Activated naive CD4-positive, alpha-beta T cell treated with anti-CD3 and anti-CD28 coated beads for 36 hours (primary cell): ENCODE measurements at regions of chr7 and their contacts with region 1.

Region 1: DNA sequence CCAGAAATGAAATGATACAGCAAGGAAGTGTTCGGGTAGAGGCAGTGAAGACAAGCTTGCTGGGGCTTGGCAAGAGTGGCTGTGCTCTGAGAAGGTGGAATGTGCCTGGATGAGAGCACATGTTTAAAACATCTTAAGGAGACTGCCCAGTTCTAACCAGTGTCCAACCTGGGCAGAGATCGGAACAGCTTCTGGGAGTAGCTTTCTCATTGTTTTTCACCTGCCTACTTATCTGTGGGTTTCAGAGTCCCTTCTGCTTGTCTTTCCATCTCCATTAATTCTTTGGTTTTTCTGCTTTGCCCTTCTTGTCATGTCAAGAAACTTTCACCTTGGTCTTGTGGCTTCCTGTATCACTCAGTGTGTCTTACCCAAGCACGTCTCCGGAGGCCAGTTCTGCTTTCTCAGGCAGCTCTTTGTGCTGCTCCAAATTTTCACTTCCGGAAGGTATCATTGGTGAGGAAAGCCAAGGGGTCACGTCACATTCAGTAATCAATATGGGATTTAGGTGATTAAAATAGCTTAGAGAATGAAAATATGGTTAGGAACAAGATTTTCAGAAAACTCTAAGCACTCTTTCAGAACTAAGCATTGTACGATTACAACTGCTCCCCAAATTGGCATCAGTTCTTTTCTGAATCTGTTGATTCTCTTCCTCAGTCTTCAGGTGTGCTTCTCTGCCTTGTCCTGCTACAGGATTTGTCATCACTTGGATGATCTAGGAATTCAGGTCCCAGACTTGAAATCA is 5.5 kb upstream of the LAMB4 start:
- DNase-seq: peak; percentile 61
- H3K4me3 Mint-ChIP-seq: no peak overlapping the region
- H3K27ac Mint-ChIP-seq: peak overlapping the region; percentile 64
- H3K4me1 Mint-ChIP-seq: peaks cover 17% of the 10 kb centered on the region
- H3K27me3 Mint-ChIP-seq: no peaks in the 10 kb centered on the region

Region 2: GRCh38 chr7:107890962-107891635 is 244.5 kb before region 1 on chr7 and contains the start of gene DLD:
- CTCF ChIA-PET with region 1: no interaction called
- intact Hi-C with region 1: loop called (anchors 1 kb)
- DNase-seq: peak; percentile 96
- H3K4me3 Mint-ChIP-seq: peak within 1 kb of the TSS; percentile 100
- H3K27ac Mint-ChIP-seq: peak within 1 kb of the TSS; percentile 98
- H3K4me1 Mint-ChIP-seq: peaks cover 37% of the 10 kb centered on the region
- H3K27me3 Mint-ChIP-seq: no peaks in the 10 kb centered on the region
- total RNA-seq, gene DLD: 92.6 to 96.8 TPM

Region 3: DNA sequence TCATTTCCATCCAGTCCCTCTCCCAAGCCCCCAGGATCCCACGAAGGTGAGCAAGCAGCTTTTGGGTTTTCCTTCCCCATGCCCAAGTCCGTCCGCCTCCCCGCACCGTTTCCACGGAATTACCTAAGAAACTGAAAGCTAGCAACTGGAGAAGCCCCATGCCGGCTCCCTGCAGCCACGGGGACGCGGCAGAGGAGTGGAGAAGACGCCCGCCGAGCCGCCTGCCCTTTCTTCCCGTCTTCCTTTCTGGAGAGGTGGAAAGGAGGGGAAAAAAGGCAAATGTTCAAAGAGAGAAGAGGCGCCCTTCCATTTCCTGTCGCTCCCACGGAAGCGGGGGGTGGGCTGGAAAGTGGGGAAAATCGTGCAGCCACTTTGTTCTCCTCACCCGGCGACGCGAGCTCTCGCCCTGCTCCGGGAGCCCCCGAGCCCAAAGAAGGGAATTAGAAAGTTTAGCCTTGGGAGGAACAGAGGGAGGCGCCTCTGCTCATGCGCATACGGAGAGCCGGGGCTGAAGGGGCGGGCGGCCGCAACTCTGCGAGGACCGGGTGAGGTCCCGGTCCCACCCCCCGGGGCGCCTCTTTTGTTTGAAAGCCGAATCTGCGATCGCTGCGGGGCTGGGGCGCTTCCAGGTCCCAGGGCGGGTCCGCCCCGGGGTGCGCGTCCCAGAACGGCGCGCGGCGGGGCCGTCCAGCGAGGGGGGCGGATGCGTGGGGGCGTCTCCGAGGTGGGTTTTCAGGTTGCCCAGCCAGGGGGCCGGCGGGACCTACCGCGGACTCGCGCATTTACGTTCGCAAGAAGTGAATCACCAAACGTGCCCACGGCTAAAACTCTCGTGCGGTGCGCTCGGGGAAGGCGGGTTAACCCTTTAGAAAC is 132.7 kb before region 1 on chr7 and contains the start of gene LAMB1:
- CTCF ChIA-PET with region 1: no interaction called
- intact Hi-C with region 1: loop called (anchors 5 kb)
- DNase-seq: no peak
- H3K4me3 Mint-ChIP-seq: peak within 1 kb of the TSS; percentile 65
- H3K27ac Mint-ChIP-seq: no peak within 1 kb of the TSS
- H3K4me1 Mint-ChIP-seq: peaks cover 19% of the 10 kb centered on the region
- H3K27me3 Mint-ChIP-seq: peaks cover 58% of the 10 kb centered on the region
- total RNA-seq, gene LAMB1: 0.14 TPM in 1 of 2 experiments, not detected in the other

Region 4: DNA sequence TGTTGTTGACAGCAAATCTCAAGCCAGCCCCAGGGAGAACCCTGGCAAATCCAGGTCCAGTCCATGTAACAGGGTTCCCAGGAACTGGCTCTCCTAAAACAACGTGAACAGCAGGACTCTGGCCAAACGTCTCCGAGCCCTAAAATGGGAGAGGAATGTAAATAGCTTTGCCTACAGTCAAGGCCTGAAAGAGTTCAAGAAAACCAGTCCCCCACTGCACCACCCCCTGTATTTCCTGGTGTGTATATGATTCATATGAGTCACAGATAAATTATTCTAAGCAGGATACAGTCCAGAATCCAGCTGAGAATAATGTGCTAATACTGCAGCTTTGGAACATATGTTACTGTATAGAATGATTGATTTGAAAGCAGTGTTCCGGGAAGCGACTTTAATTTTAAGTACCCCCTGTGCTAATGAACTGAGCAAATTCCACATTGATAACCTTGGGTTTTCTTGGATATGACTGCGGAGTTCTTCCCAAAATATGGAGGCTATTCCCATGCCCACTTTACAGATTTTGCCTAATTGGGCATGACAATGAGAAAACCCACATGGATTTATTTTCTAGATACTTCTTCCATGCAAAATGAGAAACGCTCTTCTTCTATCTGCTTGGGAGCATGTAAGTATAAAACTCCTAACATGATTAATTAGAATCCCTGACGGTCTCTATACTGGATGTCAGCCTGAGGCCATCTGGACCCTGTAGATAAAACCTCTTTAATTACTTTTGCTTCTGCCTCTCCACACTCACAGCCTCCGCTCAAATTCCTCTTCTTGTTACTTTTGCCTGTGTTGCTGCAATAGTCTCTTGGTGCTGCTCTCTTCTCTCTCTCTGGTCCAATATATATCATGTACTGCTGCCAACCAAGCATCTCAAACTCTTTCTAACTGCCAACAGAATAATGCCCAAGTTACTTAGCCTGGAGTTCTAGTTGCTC is 55.7 kb before region 1 on chr7:
- CTCF ChIA-PET with region 1: no interaction called
- intact Hi-C with region 1: no loop called
- DNase-seq: no peak
- H3K4me3 Mint-ChIP-seq: no peak overlapping the region
- H3K27ac Mint-ChIP-seq: no peak overlapping the region
- H3K4me1 Mint-ChIP-seq: no peaks in the 10 kb centered on the region
- H3K27me3 Mint-ChIP-seq: no peaks in the 10 kb centered on the region

Region 5: DNA sequence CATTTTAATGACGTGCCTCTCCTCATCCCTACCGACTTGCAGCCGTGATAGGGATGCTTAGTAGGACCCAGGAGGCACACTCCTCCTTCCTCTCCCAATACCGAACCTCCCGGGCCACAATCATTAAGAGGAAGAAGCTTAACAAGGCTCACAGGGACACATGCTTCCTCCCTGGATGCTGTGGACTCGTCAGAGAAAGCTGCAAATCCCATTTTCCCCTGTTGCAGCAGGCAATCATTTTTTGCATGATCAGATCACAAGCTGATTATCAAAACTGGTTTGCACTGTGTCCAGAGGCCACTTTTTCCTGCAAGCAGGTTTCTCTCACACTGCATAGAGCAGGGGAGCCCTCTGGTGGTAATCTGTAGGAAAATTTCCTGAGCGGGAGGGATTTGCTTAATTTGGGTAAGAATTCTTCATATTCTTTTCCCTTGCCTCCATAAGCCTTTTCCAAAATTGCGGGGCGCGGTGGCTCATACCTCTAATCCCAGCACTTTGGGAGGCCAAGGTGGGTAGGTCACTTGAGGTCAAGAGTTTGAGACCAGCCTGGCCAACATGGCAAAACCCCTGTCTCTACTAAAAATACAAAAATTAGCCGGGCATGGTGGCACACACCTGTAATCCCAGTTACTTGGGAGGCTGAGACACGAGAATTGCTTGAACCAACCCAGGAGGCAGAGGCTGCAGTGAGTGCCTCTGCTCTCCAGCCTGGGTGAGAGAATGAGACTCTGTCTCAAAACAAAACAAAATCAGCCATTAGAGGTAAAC is 10.6 kb after region 1 on chr7:
- CTCF ChIA-PET with region 1: interaction called, 31 read pairs
- intact Hi-C with region 1: no loop called
- DNase-seq: peak; percentile 64
- H3K4me3 Mint-ChIP-seq: no peak overlapping the region
- H3K27ac Mint-ChIP-seq: no peak overlapping the region
- H3K4me1 Mint-ChIP-seq: no peaks in the 10 kb centered on the region
- H3K27me3 Mint-ChIP-seq: no peaks in the 10 kb centered on the region